BJ (cell line): ENCODE measurements at regions of chr1 and their contacts with region 1.

Region 1: GRCh38 chr1:203148125-203148524 is 20.6 kb downstream of the ADORA1 start:
- DNase-seq: no peak
- H3K4me3 ChIP-seq: no peak overlapping the region
- H3K27me3 ChIP-seq: no peaks in the 10 kb centered on the region
- CTCF ChIP-seq: 0 out of 2 replicates have a peak, but pooled peaks have one; percentile 19

Region 2: GRCh38 chr1:203046984-203047630 is 101.0 kb before region 1 on chr1:
- CTCF ChIA-PET with region 1: no interaction called
- POLR2A ChIA-PET with region 1: no interaction called
- DNase-seq: peak; percentile 35
- H3K4me3 ChIP-seq: no peak overlapping the region
- H3K27me3 ChIP-seq: no peaks in the 10 kb centered on the region
- CTCF ChIP-seq: no peak

Region 3: GRCh38 chr1:203127666-203128430 is 20.3 kb before region 1 on chr1 and contains the start of gene ADORA1:
- CTCF ChIA-PET with region 1: interaction called, 67 read pairs
- POLR2A ChIA-PET with region 1: no interaction called
- DNase-seq: no peak
- H3K4me3 ChIP-seq: peak within 1 kb of the TSS; percentile 41
- H3K27me3 ChIP-seq: peaks cover 8% of the 10 kb centered on the region
- CTCF ChIP-seq: peak; percentile 32
- polyA plus RNA-seq, gene ADORA1: 2.1 and 2.4 TPM in 2 replicates

Region 4: DNA sequence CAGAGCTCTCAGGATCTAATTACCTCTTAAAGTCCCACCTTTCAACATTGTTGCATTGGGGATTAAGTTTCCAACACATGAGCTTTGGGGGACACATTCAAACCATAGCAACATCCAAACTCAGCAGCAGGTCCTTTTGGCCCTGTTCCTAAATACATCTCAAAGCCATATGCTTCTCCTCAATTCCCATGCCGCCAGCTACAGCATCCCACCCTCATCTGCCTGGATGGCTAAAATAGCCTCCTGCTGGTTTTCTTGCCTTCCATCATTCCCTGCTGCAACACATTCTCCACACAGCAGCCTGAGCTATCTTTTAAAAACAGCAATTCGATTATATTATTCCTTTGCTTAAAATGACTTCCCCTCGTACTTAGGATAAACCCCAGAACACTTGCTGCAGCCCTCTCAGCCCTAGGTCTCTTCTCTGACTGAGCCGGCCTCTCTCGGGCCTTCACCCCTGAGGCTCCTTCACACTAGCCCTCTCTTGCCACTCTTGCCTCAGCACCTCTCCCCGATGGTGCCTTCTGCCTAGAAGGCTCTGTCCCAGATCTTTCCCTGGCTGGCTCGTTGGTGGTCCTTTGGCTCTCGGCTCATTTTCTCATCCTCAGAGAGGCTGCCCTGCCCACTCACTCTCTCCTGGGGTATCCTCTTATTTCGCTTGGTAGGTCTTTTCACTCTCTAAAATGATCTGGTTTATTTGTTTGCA is 11.0 kb after region 1 on chr1:
- CTCF ChIA-PET with region 1: no interaction called
- POLR2A ChIA-PET with region 1: no interaction called
- DNase-seq: no peak
- H3K4me3 ChIP-seq: no peak overlapping the region
- H3K27me3 ChIP-seq: no peaks in the 10 kb centered on the region; the same call in 1 of the 2 replicates
- CTCF ChIP-seq: no peak

Region 5: DNA sequence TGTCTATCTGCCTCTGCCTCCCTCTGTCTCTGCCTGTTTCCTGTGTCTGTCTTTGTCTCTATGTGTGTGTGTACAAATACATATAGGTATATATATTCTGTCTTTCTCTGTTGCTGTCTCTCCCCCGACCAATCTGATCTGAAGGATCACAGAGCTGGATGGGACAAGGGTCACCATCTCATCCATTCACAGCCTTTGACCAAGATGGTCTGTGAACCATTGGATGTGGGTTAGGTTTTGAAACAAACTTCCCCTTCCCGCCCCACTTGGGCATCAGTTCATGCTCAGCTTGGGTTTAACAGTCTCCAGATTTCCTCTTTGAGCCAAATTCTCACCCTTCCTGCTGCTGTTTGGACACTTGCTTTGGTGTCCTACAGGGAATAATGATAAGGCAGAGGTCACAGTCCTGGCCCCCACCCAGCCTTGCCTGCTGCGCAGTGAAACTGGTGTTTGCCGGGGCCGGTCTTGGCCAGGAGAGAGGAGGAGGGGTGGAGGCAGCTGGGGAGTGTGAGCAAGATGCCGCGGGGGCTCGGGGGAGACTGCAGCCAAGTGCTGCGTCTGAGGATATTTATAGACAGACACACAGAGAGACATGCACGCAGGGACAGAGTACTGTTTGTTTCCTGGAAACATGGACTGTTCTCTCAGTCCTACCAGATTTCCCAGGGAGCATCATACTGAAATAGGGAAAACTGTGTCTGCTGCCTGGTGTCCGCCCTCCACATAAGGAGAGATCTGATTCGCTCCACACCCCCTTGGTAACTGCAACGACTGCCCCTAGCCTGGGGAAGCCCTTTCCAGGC is 130.2 kb after region 1 on chr1:
- CTCF ChIA-PET with region 1: no interaction called
- POLR2A ChIA-PET with region 1: no interaction called
- DNase-seq: peak; percentile 57
- H3K4me3 ChIP-seq: peak overlapping the region; percentile 9
- H3K27me3 ChIP-seq: no peaks in the 10 kb centered on the region
- CTCF ChIP-seq: no peak

Region 6: GRCh38 chr1:203726417-203726867 is 578.3 kb after region 1 on chr1:
- CTCF ChIA-PET with region 1: no interaction called
- POLR2A ChIA-PET with region 1: interaction called, 14 read pairs
- DNase-seq: no peak
- H3K4me3 ChIP-seq: no peak overlapping the region
- H3K27me3 ChIP-seq: no peaks in the 10 kb centered on the region
- CTCF ChIP-seq: no peak